Ascending aorta (tissue), 2 donors: ENCODE measurements at regions of chr3 and their contacts with region 1.

Region 1: DNA sequence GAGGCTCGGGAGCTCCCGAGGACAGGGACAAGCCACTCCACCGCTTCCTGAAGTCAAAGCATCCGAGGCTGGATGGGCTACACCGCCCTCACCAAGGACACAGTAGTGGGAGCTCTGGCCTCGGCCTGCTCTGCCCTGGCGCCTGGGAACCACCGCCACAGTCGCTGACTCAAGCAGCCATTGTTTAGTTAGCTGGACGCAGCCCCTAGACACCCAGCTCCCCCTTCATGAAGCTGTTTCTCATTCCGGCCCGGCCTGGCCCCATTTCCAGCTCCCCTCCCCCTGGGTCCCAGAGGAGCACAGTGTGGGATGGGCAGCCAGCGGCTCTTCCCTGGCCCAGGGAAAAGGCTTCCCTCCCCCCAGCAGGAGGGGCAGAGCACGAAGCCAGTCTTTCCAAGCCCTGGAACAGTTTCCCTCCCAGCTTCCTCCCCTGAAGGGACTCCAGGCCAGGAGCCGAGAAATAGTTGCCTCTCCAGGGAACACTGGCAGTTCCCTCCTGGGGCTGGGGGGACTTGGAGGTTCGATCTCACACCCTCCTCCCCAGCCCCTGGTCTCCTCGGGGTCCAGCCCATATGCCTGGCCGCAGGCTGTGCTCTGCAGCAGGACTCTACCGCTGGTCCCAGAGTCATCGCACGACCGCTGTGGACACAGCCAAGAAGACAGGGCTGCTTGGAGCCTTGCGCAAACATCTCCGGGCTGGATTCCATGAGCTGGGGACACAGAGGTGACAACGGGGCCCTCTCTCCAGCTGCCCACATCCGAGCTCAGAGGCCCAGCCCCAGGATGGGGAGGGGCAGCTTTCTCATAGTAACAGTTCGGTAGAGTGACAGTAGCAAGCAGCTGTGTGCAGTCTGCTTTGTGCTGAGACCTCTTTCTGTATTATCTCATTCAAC is 10.0 kb downstream of the PLXND1 start:
- DNase-seq: peak; percentile 79 to 95
- H3K4me3 ChIP-seq: peak overlapping the region; percentile 37 to 45
- H3K27ac ChIP-seq: peak overlapping the region; percentile 89 to 92
- H3K4me1 ChIP-seq: peaks cover 46 to 84% of the 10 kb centered on the region in 2 donors
- H3K27me3 ChIP-seq: no peaks in the 10 kb centered on the region
- CTCF ChIP-seq: no peak

Region 2: GRCh38 chr3:129507181-129507831 is 89.1 kb before region 1 on chr3:
- intact Hi-C with region 1: no loop called
- DNase-seq: no peak
- H3K4me3 ChIP-seq: no peak overlapping the region
- H3K27ac ChIP-seq: no peak overlapping the region
- H3K4me1 ChIP-seq: peaks cover 0 to 18% of the 10 kb centered on the region in 2 donors
- H3K27me3 ChIP-seq: no peaks in the 10 kb centered on the region
- CTCF ChIP-seq: no peak

Region 3: DNA sequence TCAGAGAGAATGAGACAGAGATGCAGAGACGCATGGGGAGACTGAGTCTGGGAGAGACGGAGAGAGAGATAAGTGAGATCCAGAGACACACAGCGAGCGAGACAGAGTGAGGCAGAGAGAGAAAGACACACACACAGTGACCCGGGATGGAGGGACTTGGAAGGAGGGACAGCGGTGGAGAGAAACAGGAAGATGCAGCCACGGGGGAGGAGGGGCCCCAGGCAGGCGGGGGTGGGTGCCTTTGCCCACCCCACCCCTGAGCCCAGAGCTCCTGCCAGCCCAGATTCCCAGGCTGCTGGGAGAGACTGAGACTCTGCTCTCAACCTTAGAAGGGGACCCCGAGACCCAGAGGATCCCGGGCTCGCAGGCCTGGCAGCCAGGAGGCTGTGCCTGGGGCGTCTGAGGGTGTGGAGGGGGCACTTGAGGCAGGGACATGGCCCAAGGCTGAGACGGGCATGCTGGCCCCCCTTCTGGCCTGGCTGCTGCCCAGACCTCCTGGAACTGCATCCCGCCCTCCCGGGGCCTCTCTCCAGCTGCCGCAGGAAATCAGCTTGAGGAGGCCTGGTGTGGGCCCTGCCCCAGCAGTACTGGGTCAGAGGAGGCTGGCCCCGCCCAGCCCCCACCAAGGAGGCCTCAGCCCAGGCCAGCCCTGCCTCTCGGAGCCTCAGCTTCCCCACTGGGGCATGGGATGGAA is 35.4 kb before region 1 on chr3:
- intact Hi-C with region 1: loop called (anchors 2 kb)
- DNase-seq: peak; percentile 69 to 93
- H3K4me3 ChIP-seq: peak overlapping the region; percentile 6 to 57
- H3K27ac ChIP-seq: peak overlapping the region; percentile 91 to 93
- H3K4me1 ChIP-seq: peaks cover 29 to 64% of the 10 kb centered on the region in 2 donors
- H3K27me3 ChIP-seq: no peaks in the 10 kb centered on the region
- CTCF ChIP-seq: no peak

Region 4: GRCh38 chr3:129606636-129607390 is 10.4 kb after region 1 on chr3 and contains the start of gene PLXND1:
- intact Hi-C with region 1: loop called (anchors 1 kb)
- DNase-seq: peak in 1 of 2 donors; percentile 87
- H3K4me3 ChIP-seq: peak within 1 kb of the TSS; percentile 84 to 90
- H3K27ac ChIP-seq: peak within 1 kb of the TSS; percentile 94
- H3K4me1 ChIP-seq: peaks cover 28 to 62% of the 10 kb centered on the region in 2 donors
- H3K27me3 ChIP-seq: no peaks in the 10 kb centered on the region
- CTCF ChIP-seq: no peak
- total RNA-seq, gene PLXND1: 407 TPM

Region 5: DNA sequence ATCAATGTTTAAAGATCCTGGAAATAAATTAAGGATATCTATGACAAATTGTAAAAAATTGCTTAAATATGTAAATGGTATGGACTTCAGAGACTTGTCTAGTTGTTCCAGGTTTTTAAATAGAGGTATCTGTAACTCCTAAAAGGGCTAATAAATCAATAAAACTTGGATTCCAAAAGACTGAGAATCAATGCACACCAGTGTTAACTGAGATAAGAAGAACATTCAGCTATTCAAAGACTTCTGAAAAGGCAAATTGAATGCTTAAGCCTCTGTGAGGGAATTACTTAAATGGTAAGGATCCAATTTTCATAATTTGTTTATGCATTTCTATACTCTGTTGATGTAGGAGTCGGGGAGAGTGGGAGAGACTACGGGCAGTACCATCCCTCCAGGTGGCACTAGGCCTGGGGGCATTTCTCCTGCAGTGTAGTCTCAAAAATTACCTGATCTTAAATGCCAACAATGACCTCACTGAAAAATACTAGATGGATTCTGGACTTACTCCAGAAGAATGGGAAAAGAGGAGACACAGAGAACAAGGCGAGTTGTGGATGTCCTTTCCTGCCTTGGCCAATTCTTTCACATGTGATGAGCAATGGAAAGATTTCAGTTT is 87.7 kb after region 1 on chr3:
- intact Hi-C with region 1: no loop called
- DNase-seq: no peak
- H3K4me3 ChIP-seq: no peak overlapping the region
- H3K27ac ChIP-seq: no peak overlapping the region
- H3K4me1 ChIP-seq: no peaks in the 10 kb centered on the region
- H3K27me3 ChIP-seq: no peaks in the 10 kb centered on the region
- CTCF ChIP-seq: no peak